Activated CD4-positive, alpha-beta memory T cell treated with anti-CD3 and anti-CD28 coated beads for 36 hours (primary cell): ENCODE measurements at regions of chr10 and their contacts with region 1.

Region 1: GRCh38 chr10:62019013-62019684 is 117.7 kb downstream of the ARID5B start:
- DNase-seq: no peak
- H3K4me3 Mint-ChIP-seq: no peak overlapping the region
- H3K27ac Mint-ChIP-seq: peak overlapping the region; percentile 96
- H3K4me1 Mint-ChIP-seq: peaks cover 85% of the 10 kb centered on the region
- H3K27me3 Mint-ChIP-seq: no peaks in the 10 kb centered on the region

Region 2: DNA sequence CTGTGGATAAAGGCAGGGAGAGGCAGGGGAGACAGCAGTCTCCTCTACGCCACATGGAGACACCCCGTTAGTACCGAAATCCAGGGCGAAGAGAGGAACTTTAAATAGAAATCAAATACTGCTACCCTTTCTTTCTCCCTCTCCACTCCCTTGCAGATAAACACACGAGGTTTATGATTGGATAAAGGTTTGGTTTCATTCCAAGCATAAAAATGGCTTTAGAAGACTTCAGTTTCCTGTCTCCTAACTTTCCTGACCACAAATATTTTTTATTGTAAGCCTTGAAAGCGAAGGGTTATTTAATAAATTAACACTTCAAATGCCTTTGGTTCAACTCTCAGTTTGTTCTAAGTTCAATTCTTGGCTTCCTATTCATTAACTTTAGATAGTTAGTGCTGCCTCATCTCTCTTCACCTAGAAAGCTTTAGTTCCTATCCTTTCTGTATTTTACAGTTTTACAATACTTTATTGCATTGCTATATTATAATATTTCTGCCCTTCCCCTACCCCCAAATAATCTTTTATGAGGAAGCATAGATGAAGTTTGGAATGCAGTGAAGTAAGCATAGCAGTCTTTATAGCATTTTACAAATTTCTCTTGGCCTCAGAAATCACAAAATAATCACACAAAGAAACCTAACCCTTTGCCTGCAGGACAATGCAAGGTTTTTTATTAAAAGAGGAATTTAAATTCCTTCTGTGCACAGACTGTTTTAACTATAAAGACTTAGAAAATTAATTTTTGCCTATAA is 149.2 kb before region 1 on chr10:
- CTCF ChIA-PET with region 1: no interaction called
- POLR2A ChIA-PET with region 1: no interaction called
- intact Hi-C with region 1: no loop called
- DNase-seq: no peak
- H3K4me3 Mint-ChIP-seq: no peak overlapping the region
- H3K27ac Mint-ChIP-seq: no peak overlapping the region
- H3K4me1 Mint-ChIP-seq: peaks cover 13% of the 10 kb centered on the region
- H3K27me3 Mint-ChIP-seq: no peaks in the 10 kb centered on the region

Region 3: DNA sequence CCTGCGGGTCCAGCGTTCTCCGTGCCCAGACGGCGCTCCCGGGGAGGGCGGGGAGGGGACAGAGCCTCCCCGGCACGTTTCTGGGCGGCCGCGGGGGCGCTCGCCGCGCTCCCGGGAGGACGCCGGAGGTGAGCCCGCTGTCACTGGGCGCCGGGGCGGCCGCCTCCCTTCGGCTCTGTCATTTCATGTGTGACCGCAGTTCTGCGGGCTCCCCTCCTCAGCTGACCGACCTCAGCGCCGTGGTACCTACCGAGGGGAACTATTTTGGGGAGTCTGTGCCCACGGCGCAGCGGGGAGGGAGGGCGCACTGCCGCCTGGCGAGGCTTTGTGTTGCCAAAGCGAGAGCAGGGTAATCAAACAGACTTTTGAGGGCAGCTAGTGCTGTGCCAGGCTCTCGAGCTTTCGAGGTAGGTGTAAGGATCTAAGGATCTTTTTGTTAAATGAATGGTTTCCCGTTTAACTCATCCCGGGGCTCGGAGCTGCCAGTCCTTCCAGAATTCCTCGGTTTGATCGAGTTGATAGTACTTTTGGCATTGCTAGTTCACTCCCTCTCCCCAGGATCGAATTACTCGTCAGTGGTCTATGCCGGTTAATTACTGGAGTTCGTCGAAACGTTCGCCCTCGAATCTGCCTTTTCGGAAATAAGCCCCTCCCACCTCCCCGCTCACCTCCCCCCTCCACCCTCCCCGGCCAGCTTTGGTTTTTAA is 115.8 kb before region 1 on chr10:
- CTCF ChIA-PET with region 1: interaction called, 5 read pairs
- POLR2A ChIA-PET with region 1: interaction called, 15 read pairs
- intact Hi-C with region 1: loop called (anchors 1 kb)
- DNase-seq: peak; percentile 84
- H3K4me3 Mint-ChIP-seq: peak overlapping the region; percentile 90
- H3K27ac Mint-ChIP-seq: peak overlapping the region; percentile 95
- H3K4me1 Mint-ChIP-seq: peaks cover 45% of the 10 kb centered on the region
- H3K27me3 Mint-ChIP-seq: no peaks in the 10 kb centered on the region

Region 4: DNA sequence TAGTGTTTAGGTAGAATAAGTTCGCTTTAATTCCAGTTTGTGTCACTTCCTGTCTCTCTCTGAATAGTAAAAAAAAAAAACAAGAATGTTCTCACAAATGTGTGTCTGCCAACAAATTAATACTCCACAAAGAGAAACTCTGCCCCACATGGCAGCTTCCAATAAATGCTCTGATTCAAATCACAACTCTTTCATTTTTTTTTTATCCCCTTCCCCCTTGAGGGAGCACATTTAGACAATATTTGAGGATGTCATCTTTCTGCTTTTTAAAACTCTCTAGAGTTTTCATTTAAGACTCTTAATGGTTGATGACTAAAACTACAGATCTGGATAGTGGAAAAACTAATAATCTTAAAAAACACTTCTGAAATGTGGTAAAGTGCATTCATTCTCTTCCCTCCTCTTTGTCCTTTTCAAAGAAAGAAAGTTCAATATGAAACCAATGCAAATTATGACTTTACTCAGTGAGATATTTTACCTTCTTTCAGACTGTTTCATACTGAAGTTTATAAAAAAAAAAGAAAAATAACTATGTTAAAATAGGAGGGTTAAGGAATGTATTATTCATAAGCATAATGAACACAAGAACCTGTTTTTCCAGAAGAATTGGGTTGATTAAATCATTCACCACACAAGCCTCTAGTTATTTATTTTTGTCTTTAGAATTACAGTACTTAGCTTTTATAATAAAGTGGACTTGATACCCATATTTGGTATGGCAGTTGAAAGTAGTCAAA is 75.3 kb before region 1 on chr10:
- CTCF ChIA-PET with region 1: interaction called, 3 read pairs
- POLR2A ChIA-PET with region 1: interaction called, 16 read pairs
- intact Hi-C with region 1: loop called (anchors 1 kb)
- DNase-seq: peak; percentile 34
- H3K4me3 Mint-ChIP-seq: peak overlapping the region; percentile 70
- H3K27ac Mint-ChIP-seq: peak overlapping the region; percentile 92
- H3K4me1 Mint-ChIP-seq: peaks cover 57% of the 10 kb centered on the region
- H3K27me3 Mint-ChIP-seq: no peaks in the 10 kb centered on the region

Region 5: DNA sequence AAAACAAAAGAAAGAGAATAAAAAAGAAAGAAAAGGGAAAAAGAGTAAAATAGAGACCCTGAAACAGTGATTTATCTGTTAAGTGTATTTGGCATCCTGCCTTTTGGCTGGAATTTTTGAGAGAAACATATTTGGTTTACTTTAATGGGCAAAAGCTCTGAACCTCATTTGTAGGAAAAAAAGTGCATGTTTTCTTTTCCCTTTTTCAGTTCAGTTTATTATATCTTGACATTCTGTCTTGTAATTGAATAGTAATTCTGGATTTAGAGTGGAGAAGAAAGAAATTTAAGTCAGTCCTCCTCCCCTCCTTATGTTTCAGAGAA is 48.2 kb before region 1 on chr10:
- CTCF ChIA-PET with region 1: no interaction called
- POLR2A ChIA-PET with region 1: no interaction called
- intact Hi-C with region 1: no loop called
- DNase-seq: no peak
- H3K4me3 Mint-ChIP-seq: no peak overlapping the region
- H3K27ac Mint-ChIP-seq: peak overlapping the region; percentile 64
- H3K4me1 Mint-ChIP-seq: peaks cover 82% of the 10 kb centered on the region
- H3K27me3 Mint-ChIP-seq: no peaks in the 10 kb centered on the region

Region 6: DNA sequence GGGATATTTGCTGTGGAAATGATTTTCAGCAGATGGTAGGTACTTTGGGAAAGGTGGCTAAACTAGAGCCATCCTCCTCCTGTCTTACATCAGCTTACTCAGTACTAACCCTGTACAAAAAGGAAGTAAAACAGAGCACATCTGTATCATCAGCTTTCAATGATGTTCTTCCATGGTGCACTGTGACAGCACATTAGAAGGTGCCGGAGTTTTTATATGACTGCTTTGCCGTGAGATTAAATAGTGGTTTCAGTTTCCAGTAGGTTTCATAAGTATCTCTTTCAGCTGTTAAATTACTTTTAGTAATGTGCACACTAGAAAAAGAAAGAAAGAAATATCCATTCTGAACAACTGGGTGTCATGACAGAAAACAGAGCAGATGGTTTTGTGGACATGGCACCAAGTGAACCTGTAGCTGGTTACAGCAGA is 31.2 kb before region 1 on chr10:
- CTCF ChIA-PET with region 1: interaction called, 5 read pairs
- POLR2A ChIA-PET with region 1: interaction called, 52 read pairs
- intact Hi-C with region 1: loop called (anchors 1 kb)
- DNase-seq: peak; percentile 50
- H3K4me3 Mint-ChIP-seq: peak overlapping the region; percentile 59
- H3K27ac Mint-ChIP-seq: peak overlapping the region; percentile 95
- H3K4me1 Mint-ChIP-seq: peaks cover 91% of the 10 kb centered on the region
- H3K27me3 Mint-ChIP-seq: no peaks in the 10 kb centered on the region

Region 7: DNA sequence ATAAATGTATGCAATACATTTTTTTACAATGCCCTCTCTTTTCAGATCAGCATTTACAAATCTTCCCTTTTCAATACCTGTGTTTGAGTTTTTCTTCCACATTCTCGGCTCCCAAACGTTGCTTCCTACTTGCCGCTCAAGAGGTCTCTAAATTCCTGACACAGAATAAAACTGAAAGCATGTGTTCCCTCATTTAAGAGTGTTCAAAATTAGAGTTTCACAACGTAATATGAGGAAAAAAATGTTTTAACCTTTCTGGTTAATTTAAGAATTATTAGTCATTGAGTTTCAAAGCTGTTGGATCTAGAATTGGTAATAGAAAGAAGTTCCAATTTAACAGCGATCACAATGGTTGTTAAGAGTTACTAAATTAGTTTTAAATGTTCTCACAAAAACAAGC is 17.3 kb before region 1 on chr10:
- CTCF ChIA-PET with region 1: no interaction called
- POLR2A ChIA-PET with region 1: interaction called, 9 read pairs
- intact Hi-C with region 1: loop called (anchors 1 kb)
- DNase-seq: no peak
- H3K4me3 Mint-ChIP-seq: peak overlapping the region; percentile 28
- H3K27ac Mint-ChIP-seq: peak overlapping the region; percentile 79
- H3K4me1 Mint-ChIP-seq: peaks cover 85% of the 10 kb centered on the region
- H3K27me3 Mint-ChIP-seq: no peaks in the 10 kb centered on the region